Right lobe of liver (tissue), 6 donors: ENCODE measurements at regions of chr16 and their contacts with region 1.

Region 1: GRCh38 chr16:11255737-11256660 is at the start of gene SOCS1:
- DNase-seq: peak; percentile 90
- ATAC-seq: peak; percentile 64 to 77 (median 75)
- H3K4me3 ChIP-seq: peak within 1 kb of the TSS; percentile 76 to 92 (median 89)
- H3K27ac ChIP-seq: peak within 1 kb of the TSS; percentile 90 to 96 (median 94)
- H3K4me1 ChIP-seq: peaks cover 0 to 31% (median 9%) of the 10 kb centered on the region in 4 donors
- H3K27me3 ChIP-seq: no peaks in the 10 kb centered on the region
- CTCF ChIP-seq: peak; percentile 72 to 97 (median 86)
- POLR2A ChIP-seq: peak; percentile 100
- total RNA-seq, gene SOCS1: 0.88 to 26.6 (median 10.9) TPM

Region 2: DNA sequence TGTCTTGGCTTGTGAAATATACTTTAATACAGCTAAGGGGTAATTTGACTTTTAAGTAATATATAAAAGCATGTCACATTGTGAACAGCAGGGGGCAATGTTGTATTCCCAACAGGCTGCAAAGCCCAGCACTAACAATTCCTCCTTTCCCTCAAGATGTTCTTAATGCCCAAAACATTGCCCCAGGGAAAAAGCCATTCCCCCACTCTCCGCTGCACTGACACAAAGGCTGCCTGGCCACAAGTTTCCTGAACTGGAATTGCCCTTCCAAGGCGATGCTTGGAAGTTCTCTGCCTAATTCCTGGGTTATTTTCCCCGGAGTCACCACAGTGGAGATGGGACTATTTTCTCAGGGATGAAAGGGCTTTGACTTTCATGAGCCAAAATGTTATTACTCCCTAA is 284.4 kb before region 1 on chr16:
- intact Hi-C with region 1: loop called (anchors 5 kb)
- DNase-seq: no peak
- ATAC-seq: peak; percentile 77 to 92 (median 86)
- H3K4me3 ChIP-seq: no peak overlapping the region
- H3K27ac ChIP-seq: no peak overlapping the region
- H3K4me1 ChIP-seq: no peaks in the 10 kb centered on the region
- H3K27me3 ChIP-seq: no peaks in the 10 kb centered on the region
- CTCF ChIP-seq: peak; percentile 78 to 83 (median 82)
- POLR2A ChIP-seq: no peak

Region 3: DNA sequence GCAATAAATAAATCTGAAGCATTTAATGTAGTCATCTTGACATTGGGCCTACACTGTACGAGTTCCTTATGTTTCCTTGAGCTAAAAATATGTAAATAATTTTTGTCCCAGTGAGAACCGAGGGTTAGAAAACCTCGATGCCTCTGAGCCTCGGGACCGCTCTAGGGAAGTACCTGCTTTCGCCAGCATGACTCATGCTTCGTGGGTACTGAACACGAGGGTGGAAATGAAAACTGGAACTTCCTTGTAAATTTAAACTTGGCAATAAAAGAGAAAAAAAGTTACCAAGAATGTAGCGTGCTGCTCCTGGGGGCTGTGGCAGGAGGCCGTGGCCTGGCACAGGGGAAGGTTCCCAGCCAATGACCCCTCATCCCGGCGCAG is 74.1 kb before region 1 on chr16:
- intact Hi-C with region 1: no loop called
- DNase-seq: no peak
- ATAC-seq: peak; percentile 9 to 45 (median 39)
- H3K4me3 ChIP-seq: no peak overlapping the region
- H3K27ac ChIP-seq: no peak overlapping the region
- H3K4me1 ChIP-seq: no peaks in the 10 kb centered on the region
- H3K27me3 ChIP-seq: no peaks in the 10 kb centered on the region
- CTCF ChIP-seq: no peak
- POLR2A ChIP-seq: no peak

Region 4: GRCh38 chr16:11201498-11202259 is 54.3 kb before region 1 on chr16:
- intact Hi-C with region 1: loop called in 1 of 2 experiments (anchors 10 kb)
- DNase-seq: peak in 1 of 3 donors; percentile 68
- ATAC-seq: peak in 1 of 4 donors; percentile 26
- H3K4me3 ChIP-seq: no peak overlapping the region
- H3K27ac ChIP-seq: no peak overlapping the region
- H3K4me1 ChIP-seq: peaks cover 0 to 29% (median 11%) of the 10 kb centered on the region in 4 donors
- H3K27me3 ChIP-seq: no peaks in the 10 kb centered on the region
- CTCF ChIP-seq: no peak
- POLR2A ChIP-seq: no peak

Region 5: GRCh38 chr16:11370084-11370931 is 114.3 kb after region 1 on chr16:
- intact Hi-C with region 1: no loop called
- DNase-seq: peak in 2 of 3 donors; percentile 30 to 46
- ATAC-seq: peak in 3 of 4 donors; percentile 11 to 81 (median 55)
- H3K4me3 ChIP-seq: no peak overlapping the region
- H3K27ac ChIP-seq: no peak overlapping the region
- H3K4me1 ChIP-seq: peaks cover 0 to under 1% (median 0%) of the 10 kb centered on the region in 4 donors
- H3K27me3 ChIP-seq: no peaks in the 10 kb centered on the region
- CTCF ChIP-seq: no peak
- POLR2A ChIP-seq: no peak